ENCODE measurements at regions of chr17 and their contacts with region 1.

Region 1: DNA sequence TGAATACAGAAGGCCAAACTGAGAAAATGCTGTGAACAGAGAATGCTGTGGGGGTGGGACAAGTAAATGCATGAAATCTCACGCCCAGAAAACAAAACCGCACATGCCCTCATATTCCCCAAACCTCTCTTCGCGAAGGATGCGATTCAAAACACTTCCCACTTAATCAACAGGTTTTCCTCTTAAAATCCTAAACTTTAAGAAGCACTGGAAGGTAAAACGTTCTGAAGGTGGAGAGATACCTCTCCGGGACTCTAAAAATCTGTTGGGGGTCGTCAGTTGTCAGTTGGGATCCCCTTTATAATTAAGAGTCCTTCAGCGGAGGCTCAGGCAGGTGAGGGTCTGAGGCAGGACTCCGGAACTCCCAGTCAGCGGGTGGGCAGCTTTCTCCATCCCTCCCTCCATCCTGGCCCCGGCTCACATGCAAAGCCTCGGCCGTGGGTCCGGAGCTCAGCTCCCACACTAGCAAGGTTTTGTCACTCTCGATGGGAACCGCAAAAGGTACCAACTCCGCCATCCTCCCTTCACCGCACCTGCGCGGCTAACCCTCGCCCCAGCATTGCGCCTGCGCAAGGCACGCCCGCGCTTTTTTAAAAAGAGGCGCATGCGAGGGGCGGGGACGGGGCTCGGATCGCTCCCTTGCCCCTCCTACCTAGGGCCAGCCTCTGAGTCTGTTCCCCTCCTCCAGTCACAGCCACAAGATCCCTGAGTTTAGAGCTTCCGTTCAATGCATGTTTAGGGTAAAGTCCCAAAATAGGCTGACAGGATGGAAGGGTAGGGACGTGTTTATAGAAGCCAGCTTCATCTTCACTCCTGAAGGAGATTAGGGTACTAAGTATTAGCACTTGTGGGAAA is at the start of gene RDM1:
- DNase-seq: peak; percentile 59 to 93 (median 70)
- ATAC-seq: peak; percentile 89
- H3K4me3 ChIP-seq: peak within 1 kb of the TSS; percentile 61
- H3K4me3 Mint-ChIP-seq: peak within 1 kb of the TSS; percentile 82 to 91 (median 85)
- H3K27ac ChIP-seq: no peak within 1 kb of the TSS
- H3K27ac Mint-ChIP-seq: peak within 1 kb of the TSS in 5 of 9 donors; percentile 55 to 92 (median 72)
- H3K4me1 ChIP-seq: no peaks in the 10 kb centered on the region
- H3K4me1 Mint-ChIP-seq: peaks cover 6 to 29% (median 13%) of the 10 kb centered on the region in 7 donors
- H3K27me3 ChIP-seq: no peaks in the 10 kb centered on the region
- H3K27me3 Mint-ChIP-seq: peaks cover 0 to 8% (median 0%) of the 10 kb centered on the region in 5 donors
- total RNA-seq, gene RDM1: 6.9 TPM in 1 of 5 experiments, not detected in the others

Region 2: GRCh38 chr17:35747540-35748017 is 182.9 kb before region 1 on chr17:
- CTCF ChIA-PET with region 1: no interaction called
- POLR2A ChIA-PET with region 1: no interaction called
- intact Hi-C with region 1: no loop called
- DNase-seq: peak; percentile 61 to 83 (median 75)
- ATAC-seq: peak; percentile 93
- H3K4me3 ChIP-seq: no peak overlapping the region
- H3K4me3 Mint-ChIP-seq: no peak overlapping the region
- H3K27ac ChIP-seq: no peak overlapping the region
- H3K27ac Mint-ChIP-seq: no peak overlapping the region
- H3K4me1 ChIP-seq: no peaks in the 10 kb centered on the region
- H3K4me1 Mint-ChIP-seq: peaks cover 0 to 21% (median 3%) of the 10 kb centered on the region in 7 donors
- H3K27me3 ChIP-seq: peaks cover 0 to 10% of the 10 kb centered on the region in 2 donors
- H3K27me3 Mint-ChIP-seq: peaks cover 35 to 50% (median 42%) of the 10 kb centered on the region in 5 donors

Region 3: GRCh38 chr17:35879773-35880654 is 50.4 kb before region 1 on chr17 and contains the start of gene CCL5:
- CTCF ChIA-PET with region 1: no interaction called
- POLR2A ChIA-PET with region 1: no interaction called
- intact Hi-C with region 1: loop called in 1 of 2 experiments (anchors 2 kb)
- DNase-seq: peak in 1 of 9 donors; percentile 61
- ATAC-seq: peak; percentile 92
- H3K4me3 ChIP-seq: peak within 1 kb of the TSS; percentile 31
- H3K4me3 Mint-ChIP-seq: peak within 1 kb of the TSS in 4 of 10 donors; percentile 10 to 86 (median 64)
- H3K27ac ChIP-seq: no peak within 1 kb of the TSS
- H3K27ac Mint-ChIP-seq: peak within 1 kb of the TSS in 3 of 9 donors; percentile 11 to 91 (median 12)
- H3K4me1 ChIP-seq: peaks cover 6 to 25% of the 10 kb centered on the region in 2 donors
- H3K4me1 Mint-ChIP-seq: peaks cover 6 to 50% (median 15%) of the 10 kb centered on the region in 7 donors
- H3K27me3 ChIP-seq: no peaks in the 10 kb centered on the region
- H3K27me3 Mint-ChIP-seq: peaks cover 0 to 8% (median 0%) of the 10 kb centered on the region in 5 donors
- total RNA-seq, gene CCL5: 17.0 to 192 (median 29.1) TPM

Region 4: DNA sequence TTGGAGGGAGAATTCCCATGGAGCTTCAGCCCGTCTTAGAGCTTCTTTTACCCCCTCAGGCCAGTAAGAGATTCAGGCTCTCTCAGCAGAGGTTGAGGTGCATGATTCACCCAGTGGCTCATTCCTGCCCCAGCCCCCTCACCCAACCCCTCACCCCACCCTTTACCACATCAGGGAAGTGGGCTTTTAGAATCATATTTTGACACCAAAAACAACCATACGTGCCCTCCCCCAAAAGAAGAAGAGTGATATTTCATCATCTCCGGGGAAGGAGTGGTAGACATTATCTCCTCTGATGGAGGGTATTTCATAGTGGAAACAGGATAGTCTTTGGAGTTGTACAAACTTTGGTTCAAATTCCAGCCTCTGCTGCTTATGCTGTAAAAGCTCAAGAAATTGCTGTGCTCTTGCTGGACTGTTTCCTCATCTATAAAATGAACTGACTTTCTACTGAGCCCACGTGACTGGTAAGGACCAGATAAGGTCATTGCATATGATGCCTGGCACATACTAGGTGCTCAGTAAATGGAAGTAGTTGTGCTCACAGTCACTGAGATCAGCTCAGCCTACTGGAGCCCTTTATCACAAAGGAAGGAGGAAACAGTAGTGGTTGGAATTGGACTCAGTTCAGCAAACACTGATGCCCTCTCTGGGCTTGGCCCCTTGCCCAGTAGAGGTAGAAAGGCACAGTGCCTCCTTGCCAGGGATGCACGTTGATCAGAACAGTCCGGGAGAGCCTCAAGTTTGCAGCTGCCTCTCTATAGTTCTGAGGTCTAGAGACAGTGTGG is 32.0 kb before region 1 on chr17:
- CTCF ChIA-PET with region 1: no interaction called
- POLR2A ChIA-PET with region 1: no interaction called
- intact Hi-C with region 1: loop called in 1 of 2 experiments (anchors 5 kb)
- DNase-seq: no peak
- ATAC-seq: peak; percentile 30
- H3K4me3 ChIP-seq: no peak overlapping the region
- H3K4me3 Mint-ChIP-seq: peak overlapping the region in 2 of 10 donors; percentile 15 to 54
- H3K27ac ChIP-seq: no peak overlapping the region
- H3K27ac Mint-ChIP-seq: peak overlapping the region in 1 of 9 donors; percentile 46
- H3K4me1 ChIP-seq: peaks cover 0 to 77% of the 10 kb centered on the region in 2 donors
- H3K4me1 Mint-ChIP-seq: peaks cover 0 to 51% (median 5%) of the 10 kb centered on the region in 7 donors
- H3K27me3 ChIP-seq: no peaks in the 10 kb centered on the region
- H3K27me3 Mint-ChIP-seq: peaks cover 0 to 19% (median 0%) of the 10 kb centered on the region in 5 donors

Region 5: DNA sequence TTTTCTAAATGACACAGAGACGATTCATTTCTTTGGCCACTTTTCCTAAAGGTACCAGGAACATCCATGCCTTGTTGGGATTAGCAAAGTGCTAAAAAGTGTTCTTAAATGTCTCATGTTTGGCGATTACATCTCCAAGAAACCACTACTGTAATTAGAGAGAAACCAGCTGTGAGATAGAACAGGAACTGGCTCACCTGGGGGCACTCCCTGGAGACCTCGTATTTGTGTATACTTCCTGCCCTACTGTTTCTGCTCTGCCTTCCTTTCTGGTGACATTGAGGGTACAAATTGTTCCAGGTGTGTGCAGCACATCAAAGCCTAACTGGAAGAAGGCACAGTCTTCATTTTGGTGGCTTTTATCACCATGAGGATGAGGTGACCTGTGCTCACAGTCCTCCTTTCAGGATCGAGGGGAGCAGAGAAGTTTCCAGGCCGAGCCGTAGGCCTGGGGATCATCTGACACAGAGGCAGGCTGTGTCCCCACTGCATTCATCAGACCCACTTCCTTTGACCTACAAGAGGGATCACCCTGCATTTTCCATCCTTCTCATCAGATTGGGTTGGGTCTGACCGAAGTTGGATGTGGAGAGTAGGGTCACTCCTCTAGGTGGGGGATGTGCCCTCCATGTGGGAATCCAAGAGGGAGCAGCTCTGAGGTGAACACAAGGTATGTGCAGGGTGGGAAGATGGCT is 196.9 kb after region 1 on chr17:
- CTCF ChIA-PET with region 1: no interaction called
- POLR2A ChIA-PET with region 1: no interaction called
- intact Hi-C with region 1: no loop called
- DNase-seq: no peak
- ATAC-seq: no peak
- H3K4me3 ChIP-seq: no peak overlapping the region
- H3K4me3 Mint-ChIP-seq: no peak overlapping the region
- H3K27ac ChIP-seq: no peak overlapping the region
- H3K27ac Mint-ChIP-seq: no peak overlapping the region
- H3K4me1 ChIP-seq: peaks cover 0 to 22% of the 10 kb centered on the region in 2 donors
- H3K4me1 Mint-ChIP-seq: no peaks in the 10 kb centered on the region
- H3K27me3 ChIP-seq: no peaks in the 10 kb centered on the region
- H3K27me3 Mint-ChIP-seq: peaks cover 0 to 38% (median 19%) of the 10 kb centered on the region in 5 donors

Region 6: DNA sequence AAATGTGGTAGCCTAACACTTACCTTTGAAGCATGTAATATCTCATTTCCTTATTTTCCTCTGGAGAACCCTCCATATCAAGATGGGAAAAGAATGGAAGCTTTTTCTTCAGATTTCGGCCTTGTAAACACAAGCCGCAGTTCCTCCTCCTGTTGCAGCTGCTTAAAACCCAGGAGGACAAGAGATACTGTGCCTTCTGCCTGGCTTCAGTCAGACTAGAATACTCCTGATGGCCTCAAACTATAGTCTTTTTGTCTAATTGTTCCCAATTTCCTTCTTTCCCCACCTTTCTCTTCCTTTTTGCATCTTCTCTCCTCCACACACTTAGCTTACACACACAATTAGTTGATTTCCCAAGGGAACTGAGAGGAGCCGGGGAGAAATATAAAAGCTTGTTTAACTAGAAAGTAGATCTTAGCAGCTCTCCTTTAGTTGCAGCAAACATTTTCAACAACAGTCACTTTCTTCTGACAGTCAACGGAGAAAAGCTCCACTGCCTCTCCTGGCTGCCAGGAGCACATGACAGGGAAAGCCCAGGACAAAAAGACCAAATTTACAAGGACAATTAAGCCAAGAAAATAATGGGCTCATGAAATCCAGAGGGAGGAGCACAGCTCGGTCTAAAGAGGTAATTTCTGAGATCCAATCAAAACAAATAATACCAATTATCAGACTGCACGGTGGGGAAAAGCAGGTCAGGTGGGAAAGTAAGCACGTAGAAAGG is 1369.0 kb after region 1 on chr17:
- CTCF ChIA-PET with region 1: no interaction called
- POLR2A ChIA-PET with region 1: no interaction called
- intact Hi-C with region 1: no loop called
- DNase-seq: no peak
- ATAC-seq: no peak
- H3K4me3 ChIP-seq: no peak overlapping the region
- H3K4me3 Mint-ChIP-seq: no peak overlapping the region
- H3K27ac ChIP-seq: no peak overlapping the region
- H3K27ac Mint-ChIP-seq: no peak overlapping the region
- H3K4me1 ChIP-seq: no peaks in the 10 kb centered on the region
- H3K4me1 Mint-ChIP-seq: peaks cover 0 to 14% (median 0%) of the 10 kb centered on the region in 7 donors
- H3K27me3 ChIP-seq: no peaks in the 10 kb centered on the region
- H3K27me3 Mint-ChIP-seq: no peaks in the 10 kb centered on the region

Measured in naive thymus-derived CD4-positive, alpha-beta T cell (primary cell).